Endothelial cell of umbilical vein (primary cell): ENCODE measurements at regions of chr18 and their contacts with region 1.

Region 1: GRCh38 chr18:9474983-9475642 is at the start of gene RALBP1:
- DNase-seq: peak; percentile 100
- H3K4me3 ChIP-seq: peak within 1 kb of the TSS; percentile 90 to 100 (median 91)
- H3K27ac ChIP-seq: peak within 1 kb of the TSS; percentile 74
- H3K4me1 ChIP-seq: peaks cover 14% of the 10 kb centered on the region
- H3K27me3 ChIP-seq: no peaks in the 10 kb centered on the region
- CTCF ChIP-seq: peak in 1 of 2 donors; percentile 11
- POLR2A ChIP-seq: peak; percentile 93
- total RNA-seq, gene RALBP1: 63.5 and 68.4 TPM in 2 replicates

Region 2: DNA sequence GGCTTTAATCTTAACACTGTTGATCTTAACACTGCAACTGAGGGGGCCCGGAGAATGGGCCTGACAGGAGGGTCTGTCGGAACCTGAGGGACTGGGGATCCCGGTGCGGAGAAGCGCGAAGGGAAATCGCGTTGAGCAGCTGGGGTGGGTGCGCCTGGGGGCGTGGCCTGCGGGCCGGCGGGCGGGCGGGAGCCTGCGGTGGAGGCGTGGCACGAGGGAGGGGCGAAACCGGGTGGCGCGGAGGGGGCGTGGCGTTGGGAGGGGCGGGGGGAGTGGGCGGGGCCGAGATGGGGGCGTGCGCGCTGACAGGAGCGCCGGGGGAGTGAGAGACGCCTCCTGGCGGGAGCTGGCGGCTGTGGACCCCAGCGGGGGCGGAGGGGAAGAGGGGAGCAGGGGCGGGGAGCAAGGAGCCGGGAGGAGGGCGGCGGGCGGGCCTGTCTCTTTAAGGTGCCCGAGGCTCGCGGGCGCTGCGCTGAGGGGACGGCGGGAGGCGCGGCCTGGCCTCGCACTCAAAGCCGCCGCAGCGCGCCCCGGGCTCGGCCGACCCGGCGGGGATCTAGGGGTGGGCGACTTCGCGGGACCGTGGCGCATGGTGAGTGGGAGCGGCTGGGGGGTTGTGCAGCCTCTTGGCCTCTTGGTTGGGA is 140.7 kb before region 1 on chr18 and contains the start of gene TWSG1:
- CTCF ChIA-PET with region 1: no interaction called
- POLR2A ChIA-PET with region 1: no interaction called
- dilution Hi-C with region 1: no loop called
- intact Hi-C with region 1: loop called (anchors 1 kb)
- DNase-seq: peak; percentile 93
- H3K4me3 ChIP-seq: peak within 1 kb of the TSS; percentile 77 to 88 (median 87)
- H3K27ac ChIP-seq: peak within 1 kb of the TSS; percentile 71
- H3K4me1 ChIP-seq: peaks cover 3% of the 10 kb centered on the region
- H3K27me3 ChIP-seq: no peaks in the 10 kb centered on the region
- CTCF ChIP-seq: peak in 1 of 2 donors; percentile 65
- POLR2A ChIP-seq: peak; percentile 65
- total RNA-seq, gene TWSG1: 57.4 and 69.6 TPM in 2 replicates

Region 3: DNA sequence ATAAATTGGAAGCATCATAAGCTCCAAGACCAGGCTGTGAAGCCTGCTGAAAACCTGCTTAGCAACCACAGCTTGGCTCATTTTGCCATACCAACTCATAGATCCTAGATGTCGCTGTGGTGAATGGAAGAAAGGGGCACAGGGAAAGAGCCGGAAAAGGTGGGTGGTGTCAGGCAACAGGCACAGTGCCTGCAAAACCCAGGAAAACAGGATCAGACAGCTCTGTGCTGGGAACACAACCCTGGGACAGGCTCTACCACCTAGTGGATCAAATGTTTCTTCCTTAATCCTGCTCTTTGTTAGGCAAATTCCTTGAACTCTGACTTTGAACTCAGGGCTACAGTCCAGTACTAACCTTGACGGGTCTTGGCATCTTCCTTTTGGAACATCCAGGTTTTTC is 108.9 kb before region 1 on chr18:
- CTCF ChIA-PET with region 1: interaction called, 17 read pairs
- POLR2A ChIA-PET with region 1: no interaction called
- dilution Hi-C with region 1: no loop called
- intact Hi-C with region 1: loop called (anchors 10 kb)
- DNase-seq: peak; percentile 79
- H3K4me3 ChIP-seq: no peak overlapping the region
- H3K27ac ChIP-seq: no peak overlapping the region
- H3K4me1 ChIP-seq: peaks cover 7% of the 10 kb centered on the region
- H3K27me3 ChIP-seq: no peaks in the 10 kb centered on the region
- CTCF ChIP-seq: peak; percentile 47 to 52
- POLR2A ChIP-seq: no peak

Region 4: GRCh38 chr18:9417073-9417841 is 57.9 kb before region 1 on chr18:
- CTCF ChIA-PET with region 1: no interaction called
- POLR2A ChIA-PET with region 1: no interaction called
- dilution Hi-C with region 1: no loop called
- intact Hi-C with region 1: loop called (anchors 5 kb)
- DNase-seq: peak; percentile 69
- H3K4me3 ChIP-seq: no peak overlapping the region
- H3K27ac ChIP-seq: peak overlapping the region; percentile 21
- H3K4me1 ChIP-seq: peaks cover 22% of the 10 kb centered on the region
- H3K27me3 ChIP-seq: no peaks in the 10 kb centered on the region
- CTCF ChIP-seq: no peak
- POLR2A ChIP-seq: no peak

Region 5: GRCh38 chr18:9454061-9454703 is 20.9 kb before region 1 on chr18:
- CTCF ChIA-PET with region 1: no interaction called
- POLR2A ChIA-PET with region 1: no interaction called
- dilution Hi-C with region 1: no loop called
- intact Hi-C with region 1: no loop called
- DNase-seq: no peak
- H3K4me3 ChIP-seq: no peak overlapping the region
- H3K27ac ChIP-seq: no peak overlapping the region
- H3K4me1 ChIP-seq: no peaks in the 10 kb centered on the region
- H3K27me3 ChIP-seq: peaks cover 6 to 8% of the 10 kb centered on the region in 2 experiments
- CTCF ChIP-seq: no peak
- POLR2A ChIP-seq: no peak